ENCODE measurements at regions of chr5 and their contacts with region 1.

Region 1: GRCh38 chr5:36690041-36690961 is 83.9 kb downstream of the SLC1A3 start:
- DNase-seq: peak; percentile 79
- H3K4me3 Mint-ChIP-seq: peak overlapping the region; percentile 81
- H3K27ac Mint-ChIP-seq: no peak overlapping the region
- H3K4me1 Mint-ChIP-seq: peaks cover 12% of the 10 kb centered on the region
- H3K27me3 Mint-ChIP-seq: peaks cover 37% of the 10 kb centered on the region

Region 2: GRCh38 chr5:36414869-36415282 is 275.4 kb before region 1 on chr5:
- CTCF ChIA-PET with region 1: interaction called, 6 read pairs
- intact Hi-C with region 1: loop called (anchors 1 kb)
- DNase-seq: no peak
- H3K4me3 Mint-ChIP-seq: no peak overlapping the region
- H3K27ac Mint-ChIP-seq: no peak overlapping the region
- H3K4me1 Mint-ChIP-seq: no peaks in the 10 kb centered on the region
- H3K27me3 Mint-ChIP-seq: peaks cover 7% of the 10 kb centered on the region

Region 3: GRCh38 chr5:36801521-36801920 is 111.2 kb after region 1 on chr5:
- CTCF ChIA-PET with region 1: no interaction called
- intact Hi-C with region 1: no loop called
- DNase-seq: no peak
- H3K4me3 Mint-ChIP-seq: no peak overlapping the region
- H3K27ac Mint-ChIP-seq: no peak overlapping the region
- H3K4me1 Mint-ChIP-seq: no peaks in the 10 kb centered on the region
- H3K27me3 Mint-ChIP-seq: peaks cover 2% of the 10 kb centered on the region

Region 4: DNA sequence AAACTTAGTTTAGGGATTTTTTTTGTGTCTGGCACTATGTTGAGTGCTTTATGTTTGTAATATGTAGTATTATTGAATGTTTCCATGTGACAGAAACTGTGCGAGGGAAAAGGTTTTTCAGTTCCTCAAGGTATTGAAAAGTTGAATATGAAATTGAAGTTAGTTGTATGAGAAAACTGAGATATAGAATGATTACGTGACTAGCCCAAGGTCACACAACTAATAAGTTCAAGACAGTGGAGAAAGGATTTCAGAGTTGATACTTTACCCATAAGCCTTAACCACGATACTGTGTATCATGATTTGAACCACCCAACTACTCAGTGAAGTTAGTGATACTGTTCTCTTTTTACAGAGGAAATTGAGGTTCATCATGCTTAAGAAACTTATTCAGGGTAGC is 191.9 kb after region 1 on chr5:
- CTCF ChIA-PET with region 1: no interaction called
- intact Hi-C with region 1: no loop called
- DNase-seq: no peak
- H3K4me3 Mint-ChIP-seq: no peak overlapping the region
- H3K27ac Mint-ChIP-seq: peak overlapping the region; percentile 4
- H3K4me1 Mint-ChIP-seq: peaks cover 54% of the 10 kb centered on the region
- H3K27me3 Mint-ChIP-seq: no peaks in the 10 kb centered on the region

Measured in activated naive CD4-positive, alpha-beta T cell treated with anti-CD3 and anti-CD28 coated beads for 36 hours (primary cell).